CD4-positive, alpha-beta memory T cell (primary cell): ENCODE measurements at regions of chr9 and their contacts with region 1.

Region 1: GRCh38 chr9:91775011-91775707 is 174.9 kb downstream of the ROR2 start:
- DNase-seq: peak; percentile 52 to 70 (median 56)
- H3K4me3 ChIP-seq: no peak overlapping the region
- H3K4me3 Mint-ChIP-seq: no peak overlapping the region
- H3K27ac ChIP-seq: no peak overlapping the region
- H3K27ac Mint-ChIP-seq: peak overlapping the region in 2 of 7 donors; percentile 5 to 19
- H3K4me1 ChIP-seq: no peaks in the 10 kb centered on the region
- H3K4me1 Mint-ChIP-seq: peaks cover 0 to 13% (median 10%) of the 10 kb centered on the region in 4 donors
- H3K27me3 ChIP-seq: no peaks in the 10 kb centered on the region
- H3K27me3 Mint-ChIP-seq: peaks cover 15 to 21% of the 10 kb centered on the region in 2 donors

Region 2: GRCh38 chr9:91758491-91758981 is 16.6 kb before region 1 on chr9:
- CTCF ChIA-PET with region 1: interaction called, 20 read pairs
- POLR2A ChIA-PET with region 1: no interaction called
- intact Hi-C with region 1: no loop called
- DNase-seq: no peak
- H3K4me3 ChIP-seq: no peak overlapping the region
- H3K4me3 Mint-ChIP-seq: no peak overlapping the region
- H3K27ac ChIP-seq: no peak overlapping the region
- H3K27ac Mint-ChIP-seq: no peak overlapping the region
- H3K4me1 ChIP-seq: no peaks in the 10 kb centered on the region
- H3K4me1 Mint-ChIP-seq: no peaks in the 10 kb centered on the region
- H3K27me3 ChIP-seq: no peaks in the 10 kb centered on the region
- H3K27me3 Mint-ChIP-seq: peaks cover 0 to 5% of the 10 kb centered on the region in 2 donors

Region 3: DNA sequence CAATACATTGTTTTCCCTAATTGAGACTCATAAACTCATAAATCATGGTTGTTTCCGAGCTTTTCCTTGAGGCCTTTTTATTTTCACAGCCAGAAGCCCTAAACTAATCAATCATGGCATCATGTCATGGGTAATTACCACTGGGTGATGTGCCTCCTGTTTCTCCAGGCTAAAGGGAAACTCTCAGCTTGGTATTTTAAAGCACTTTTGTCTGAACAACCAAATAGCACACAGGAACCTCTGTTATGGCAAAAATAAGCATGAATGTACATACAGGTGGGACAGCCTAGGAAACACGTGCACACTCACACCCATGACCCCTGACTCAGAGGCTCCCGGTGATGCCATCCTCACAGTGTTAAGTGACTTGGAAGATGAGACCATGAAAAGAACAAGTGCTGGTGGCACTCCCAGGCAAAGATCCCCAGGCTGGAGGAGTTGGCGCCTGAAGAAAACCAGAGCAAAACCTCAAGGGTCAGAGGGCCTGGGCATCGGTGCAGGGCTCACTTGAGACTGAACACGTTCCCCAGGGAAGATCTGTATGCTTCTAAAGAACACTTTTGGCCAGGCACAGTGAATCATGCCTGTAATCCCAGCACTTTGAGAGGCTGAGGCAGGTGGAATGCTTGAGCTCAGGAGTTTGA is 20.6 kb after region 1 on chr9:
- CTCF ChIA-PET with region 1: no interaction called
- POLR2A ChIA-PET with region 1: no interaction called
- intact Hi-C with region 1: no loop called
- DNase-seq: peak in 1 of 5 donors; percentile 52
- H3K4me3 ChIP-seq: no peak overlapping the region
- H3K4me3 Mint-ChIP-seq: no peak overlapping the region
- H3K27ac ChIP-seq: peak overlapping the region; percentile 4
- H3K27ac Mint-ChIP-seq: peak overlapping the region; percentile 67 to 93 (median 86)
- H3K4me1 ChIP-seq: peaks cover 31% of the 10 kb centered on the region
- H3K4me1 Mint-ChIP-seq: peaks cover 21 to 51% (median 28%) of the 10 kb centered on the region in 4 donors
- H3K27me3 ChIP-seq: no peaks in the 10 kb centered on the region
- H3K27me3 Mint-ChIP-seq: no peaks in the 10 kb centered on the region

Region 4: GRCh38 chr9:91882627-91883026 is 107.5 kb after region 1 on chr9:
- CTCF ChIA-PET with region 1: no interaction called
- POLR2A ChIA-PET with region 1: no interaction called
- intact Hi-C with region 1: loop called (anchors 1 kb)
- DNase-seq: peak in 1 of 5 donors; percentile 4
- H3K4me3 ChIP-seq: no peak overlapping the region
- H3K4me3 Mint-ChIP-seq: no peak overlapping the region
- H3K27ac ChIP-seq: no peak overlapping the region
- H3K27ac Mint-ChIP-seq: no peak overlapping the region
- H3K4me1 ChIP-seq: no peaks in the 10 kb centered on the region
- H3K4me1 Mint-ChIP-seq: no peaks in the 10 kb centered on the region
- H3K27me3 ChIP-seq: no peaks in the 10 kb centered on the region
- H3K27me3 Mint-ChIP-seq: peaks cover 6 to 9% of the 10 kb centered on the region in 2 donors